Activated naive CD4-positive, alpha-beta T cell treated with anti-CD3 and anti-CD28 coated beads, Interleukin-2, amount 10 ng/mL, durations not matched to agents 7 days and 5 days (primary cell): ENCODE measurements at regions of chr6 and their contacts with region 1.

Region 1: GRCh38 chr6:150813319-150813992 is 52.0 kb upstream of the MTHFD1L start:
- DNase-seq: no peak
- H3K4me3 Mint-ChIP-seq: no peak overlapping the region
- H3K27ac Mint-ChIP-seq: no peak overlapping the region
- H3K4me1 Mint-ChIP-seq: no peaks in the 10 kb centered on the region
- H3K27me3 Mint-ChIP-seq: peaks cover 23% of the 10 kb centered on the region

Region 2: GRCh38 chr6:150079604-150080003 is 733.9 kb before region 1 on chr6:
- CTCF ChIA-PET with region 1: interaction called, 11 read pairs
- DNase-seq: peak; percentile 64
- H3K4me3 Mint-ChIP-seq: no peak overlapping the region
- H3K27ac Mint-ChIP-seq: no peak overlapping the region
- H3K4me1 Mint-ChIP-seq: peaks cover 24% of the 10 kb centered on the region
- H3K27me3 Mint-ChIP-seq: peaks cover 40% of the 10 kb centered on the region

Region 3: DNA sequence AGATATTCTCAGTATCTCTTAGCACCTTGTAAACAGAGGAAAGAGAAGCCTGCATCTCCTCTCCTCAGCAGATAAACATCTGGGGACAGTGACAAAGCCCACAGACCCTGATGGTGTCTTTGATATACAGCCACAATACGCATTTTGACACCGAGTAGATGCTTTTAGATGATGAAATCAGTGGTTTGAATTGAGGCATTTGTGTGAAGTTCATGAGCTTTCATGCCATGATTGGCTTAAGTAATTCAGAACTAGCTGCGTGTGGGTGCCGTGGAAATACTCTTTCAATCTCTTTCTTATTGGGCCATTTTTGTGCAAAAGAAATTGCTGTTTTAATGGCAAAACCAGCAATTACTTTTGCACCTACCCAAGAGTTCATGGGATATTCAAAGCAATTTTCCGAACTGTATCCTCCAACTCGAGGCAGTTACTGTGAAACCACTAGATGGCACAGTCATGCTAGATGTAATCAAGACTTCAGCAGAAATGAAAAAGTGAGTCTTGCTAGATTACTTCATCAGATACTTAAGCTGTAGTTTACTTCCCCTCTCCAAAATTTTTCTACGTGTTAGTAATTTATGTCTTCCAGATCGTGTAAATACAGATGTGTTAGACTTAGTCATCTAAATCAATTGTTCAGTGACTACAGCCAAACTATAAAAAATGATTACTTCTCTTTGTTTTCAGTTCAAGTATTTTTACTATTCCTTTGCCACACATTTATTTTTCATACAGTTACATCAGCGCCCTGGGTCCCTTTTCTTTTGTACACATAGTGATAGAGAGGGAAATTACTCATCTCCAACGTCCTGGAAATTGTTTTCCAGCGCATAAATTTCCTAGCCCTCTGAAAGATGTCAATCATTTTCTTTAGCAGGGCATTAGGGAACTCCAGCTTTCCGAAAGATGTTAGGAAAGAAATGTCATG is 395.3 kb before region 1 on chr6:
- CTCF ChIA-PET with region 1: interaction called, 74 read pairs
- DNase-seq: no peak
- H3K4me3 Mint-ChIP-seq: peak overlapping the region; percentile 53
- H3K27ac Mint-ChIP-seq: no peak overlapping the region
- H3K4me1 Mint-ChIP-seq: peaks cover 14% of the 10 kb centered on the region
- H3K27me3 Mint-ChIP-seq: peaks cover 15% of the 10 kb centered on the region

Region 4: GRCh38 chr6:150685860-150686259 is 127.6 kb before region 1 on chr6:
- CTCF ChIA-PET with region 1: interaction called, 12 read pairs
- DNase-seq: peak; percentile 52
- H3K4me3 Mint-ChIP-seq: no peak overlapping the region
- H3K27ac Mint-ChIP-seq: no peak overlapping the region
- H3K4me1 Mint-ChIP-seq: peaks cover 11% of the 10 kb centered on the region
- H3K27me3 Mint-ChIP-seq: peaks cover 13% of the 10 kb centered on the region

Region 5: DNA sequence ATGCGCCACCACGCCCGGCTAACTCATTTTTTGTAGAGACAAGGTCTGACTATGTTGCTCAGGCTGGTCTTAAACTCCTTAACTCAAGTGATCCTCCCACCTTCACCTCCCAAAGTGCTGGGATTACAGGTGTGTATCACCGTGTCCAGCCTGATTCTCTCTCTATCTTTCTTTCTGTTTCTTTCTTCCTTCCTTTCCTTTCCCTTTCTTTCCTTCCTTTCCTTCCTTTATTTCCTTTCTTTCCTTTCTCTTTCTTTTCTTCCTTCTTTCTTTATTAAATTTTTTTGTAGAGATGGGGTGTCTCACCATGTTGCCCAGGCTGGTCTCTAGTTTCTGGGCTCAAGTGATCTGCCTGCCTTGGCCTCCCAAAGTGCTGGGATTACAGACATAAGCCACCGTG is 13.3 kb after region 1 on chr6:
- CTCF ChIA-PET with region 1: interaction called, 14 read pairs
- DNase-seq: no peak
- H3K4me3 Mint-ChIP-seq: no peak overlapping the region
- H3K27ac Mint-ChIP-seq: no peak overlapping the region
- H3K4me1 Mint-ChIP-seq: no peaks in the 10 kb centered on the region
- H3K27me3 Mint-ChIP-seq: no peaks in the 10 kb centered on the region

Region 6: GRCh38 chr6:151335930-151336329 is 522.5 kb after region 1 on chr6:
- CTCF ChIA-PET with region 1: interaction called, 15 read pairs
- DNase-seq: no peak
- H3K4me3 Mint-ChIP-seq: no peak overlapping the region
- H3K27ac Mint-ChIP-seq: no peak overlapping the region
- H3K4me1 Mint-ChIP-seq: peaks cover 3% of the 10 kb centered on the region
- H3K27me3 Mint-ChIP-seq: peaks cover 13% of the 10 kb centered on the region